IMR-90 (cell line): ENCODE measurements at regions of chr6 and their contacts with region 1.

Region 1: DNA sequence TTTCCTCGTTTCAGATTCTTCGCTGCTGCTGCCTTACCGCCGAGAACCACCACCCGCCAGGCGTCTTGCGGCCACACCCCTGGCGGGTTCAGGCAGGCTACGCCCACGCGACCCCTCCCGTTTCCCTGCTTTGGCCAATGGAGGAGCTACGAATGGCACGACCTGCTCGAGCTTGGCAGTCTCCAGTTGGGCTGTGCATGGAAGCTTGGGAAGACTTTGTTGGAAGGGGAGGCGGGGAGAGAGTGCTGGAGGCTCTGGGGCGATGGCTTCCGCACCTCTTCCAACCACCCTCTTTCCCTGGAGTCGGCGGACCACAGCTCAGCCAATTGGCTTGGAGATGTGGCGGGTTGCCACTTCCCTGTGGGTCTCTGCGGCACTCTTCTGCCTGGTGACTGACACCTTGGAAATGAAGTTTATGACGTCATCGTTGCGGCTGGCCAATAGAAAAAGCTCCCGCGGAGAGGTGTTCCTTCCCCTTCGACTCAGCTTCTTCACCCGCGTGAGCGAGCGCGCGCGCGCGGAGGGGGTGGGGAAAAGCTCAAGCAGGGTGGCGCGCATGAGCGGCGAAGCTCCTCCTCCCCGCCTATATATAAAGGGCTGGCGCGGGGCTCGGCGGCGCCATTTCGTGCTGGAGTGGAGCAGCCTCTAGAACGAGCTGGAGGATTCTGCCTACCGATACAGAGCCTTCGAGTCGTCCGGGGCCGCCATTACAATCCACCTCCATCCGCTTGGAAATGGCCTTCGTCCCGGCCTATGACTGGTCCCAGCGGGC is 3.4 kb downstream of the BRD2 start:
- DNase-seq: peak; percentile 100
- ATAC-seq: peak; percentile 31
- H3K4me3 ChIP-seq: peak overlapping the region; percentile 92
- H3K27ac ChIP-seq: peak overlapping the region; percentile 100
- H3K4me1 ChIP-seq: peaks cover 7% of the 10 kb centered on the region
- H3K27me3 ChIP-seq: no peaks in the 10 kb centered on the region
- CTCF ChIP-seq: no peak
- POLR2A ChIP-seq: peak; percentile 100
- RAD21 ChIP-seq: 0 out of 2 replicates have a peak, but pooled peaks have one; percentile 22

Region 2: DNA sequence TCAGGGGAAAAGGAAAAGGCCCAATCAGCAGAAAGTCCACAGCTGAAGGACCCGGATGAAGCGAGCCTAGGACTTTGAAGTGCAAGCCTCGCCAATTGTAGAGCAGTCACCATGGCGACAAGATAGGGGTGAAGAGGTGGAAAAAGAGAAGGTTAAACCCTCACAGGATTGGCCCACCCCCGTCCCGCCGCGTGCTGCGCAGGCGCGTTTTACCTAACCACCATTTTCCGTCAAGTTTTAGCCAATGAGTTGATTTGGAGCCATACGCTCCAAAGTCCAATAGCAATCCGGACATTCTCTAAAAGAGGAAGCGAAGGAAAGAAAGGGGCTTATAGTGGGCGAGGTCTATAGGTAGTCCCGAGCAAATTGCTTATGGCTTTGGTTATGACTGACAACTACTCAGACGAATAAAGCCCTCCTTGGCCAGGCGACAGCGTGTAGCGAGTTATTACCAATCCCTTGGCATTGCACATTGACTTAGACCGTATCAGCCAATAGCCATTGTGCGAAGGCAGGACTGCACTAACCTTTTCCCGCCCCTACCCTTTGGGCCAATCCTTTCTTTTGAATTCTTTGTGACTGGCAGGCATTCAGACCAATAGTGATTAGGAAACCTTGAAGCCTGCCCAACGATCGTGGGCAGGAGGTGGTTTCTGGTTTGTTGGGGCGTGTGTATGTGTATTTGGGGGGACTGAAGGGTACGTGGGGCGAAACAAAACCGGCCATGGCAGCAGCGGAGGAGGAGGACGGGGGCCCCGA is 793.8 kb before region 1 on chr6 and contains the start of gene RNF5:
- CTCF ChIA-PET with region 1: no interaction called
- POLR2A ChIA-PET with region 1: interaction called, 9 read pairs
- dilution Hi-C with region 1: no loop called
- in situ Hi-C with region 1: loop called (anchors 25 kb)
- intact Hi-C with region 1: no loop called
- DNase-seq: peak; percentile 100
- ATAC-seq: peak; percentile 78
- H3K4me3 ChIP-seq: peak within 1 kb of the TSS; percentile 65
- H3K27ac ChIP-seq: peak within 1 kb of the TSS; percentile 74
- H3K4me1 ChIP-seq: peaks cover 5% of the 10 kb centered on the region
- H3K27me3 ChIP-seq: no peaks in the 10 kb centered on the region
- CTCF ChIP-seq: no peak
- POLR2A ChIP-seq: peak; percentile 23; the same call in 1 of the 2 replicates
- RAD21 ChIP-seq: no peak
- total RNA-seq, gene RNF5: 18.8 and 28.1 TPM in 2 replicates

Region 3: GRCh38 chr6:32457054-32457453 is 514.7 kb before region 1 on chr6:
- CTCF ChIA-PET with region 1: no interaction called
- POLR2A ChIA-PET with region 1: no interaction called
- dilution Hi-C with region 1: no loop called
- in situ Hi-C with region 1: no loop called
- intact Hi-C with region 1: no loop called
- DNase-seq: no peak
- ATAC-seq: no peak
- H3K4me3 ChIP-seq: no peak overlapping the region
- H3K27ac ChIP-seq: no peak overlapping the region
- H3K4me1 ChIP-seq: no peaks in the 10 kb centered on the region
- H3K27me3 ChIP-seq: no peaks in the 10 kb centered on the region
- CTCF ChIP-seq: no peak
- POLR2A ChIP-seq: no peak
- RAD21 ChIP-seq: no peak

Region 4: GRCh38 chr6:32843979-32844838 is 127.6 kb before region 1 on chr6 and contains the start of gene PSMB8:
- CTCF ChIA-PET with region 1: no interaction called
- POLR2A ChIA-PET with region 1: no interaction called
- dilution Hi-C with region 1: no loop called
- in situ Hi-C with region 1: no loop called
- intact Hi-C with region 1: loop called (anchors 2 kb)
- DNase-seq: peak; percentile 90
- ATAC-seq: peak; percentile 94
- H3K4me3 ChIP-seq: peak within 1 kb of the TSS; percentile 73
- H3K27ac ChIP-seq: peak within 1 kb of the TSS; percentile 67
- H3K4me1 ChIP-seq: 0 out of 2 replicates have a peak, but pooled peaks cover 2% of the 10 kb centered on the region
- H3K27me3 ChIP-seq: no peaks in the 10 kb centered on the region
- CTCF ChIP-seq: 0 out of 2 replicates have a peak, but pooled peaks have one; percentile 19
- POLR2A ChIP-seq: peak; percentile 27; the same call in 1 of the 2 replicates
- RAD21 ChIP-seq: no peak
- total RNA-seq, gene PSMB8: 26.1 and 33.3 TPM in 2 replicates

Region 5: GRCh38 chr6:32933636-32934085 is 38.1 kb before region 1 on chr6:
- CTCF ChIA-PET with region 1: interaction called, 18 read pairs
- POLR2A ChIA-PET with region 1: interaction called, 8 read pairs
- dilution Hi-C with region 1: no loop called
- in situ Hi-C with region 1: loop called (anchors 5 kb)
- intact Hi-C with region 1: loop called (anchors 2 kb)
- DNase-seq: peak; percentile 73
- ATAC-seq: peak; percentile 91
- H3K4me3 ChIP-seq: no peak overlapping the region
- H3K27ac ChIP-seq: no peak overlapping the region
- H3K4me1 ChIP-seq: no peaks in the 10 kb centered on the region
- H3K27me3 ChIP-seq: peaks cover 17% of the 10 kb centered on the region
- CTCF ChIP-seq: peak; percentile 85
- POLR2A ChIP-seq: no peak
- RAD21 ChIP-seq: peak; percentile 80

Region 6: DNA sequence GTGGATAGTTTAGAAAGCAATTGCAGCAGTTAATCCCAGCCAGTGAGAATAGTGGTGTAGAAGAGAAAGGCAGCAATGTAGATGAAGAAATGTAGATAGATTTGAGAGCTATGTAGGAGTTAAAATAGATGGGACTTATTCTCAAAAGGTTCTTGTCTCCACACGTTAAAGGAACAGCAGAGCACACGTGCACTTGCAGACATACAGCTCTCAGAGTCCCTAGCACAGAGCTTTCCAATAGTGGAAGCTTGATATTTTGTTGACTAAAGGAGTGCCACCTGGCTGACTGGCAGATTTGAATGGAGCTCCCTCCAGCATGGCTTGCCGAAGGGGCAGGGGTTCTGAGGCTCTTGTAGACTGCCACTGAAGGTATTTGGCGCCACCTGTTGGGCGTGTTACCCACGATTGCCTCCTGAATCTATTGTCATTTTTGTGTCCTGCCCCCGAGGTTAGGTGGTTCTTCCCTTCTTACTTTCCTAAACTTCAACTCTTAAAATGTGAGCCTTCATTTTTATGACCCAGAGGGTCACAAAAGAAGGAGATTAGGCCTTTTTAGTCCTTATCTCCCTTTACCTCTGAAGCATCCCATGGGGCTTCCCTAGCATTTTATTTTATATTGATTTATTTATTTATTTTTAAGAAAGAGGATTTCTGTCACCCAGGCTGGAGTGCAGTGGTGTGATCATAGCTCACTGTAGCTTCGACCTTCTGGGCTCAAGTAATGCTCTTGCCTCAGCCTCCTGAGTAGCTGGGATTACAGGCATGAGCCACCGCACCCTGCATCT is 13.0 kb after region 1 on chr6:
- CTCF ChIA-PET with region 1: interaction called, 17 read pairs
- POLR2A ChIA-PET with region 1: interaction called, 27 read pairs
- dilution Hi-C with region 1: no loop called
- in situ Hi-C with region 1: no loop called
- intact Hi-C with region 1: no loop called
- DNase-seq: peak; percentile 79
- ATAC-seq: peak; percentile 75
- H3K4me3 ChIP-seq: no peak overlapping the region
- H3K27ac ChIP-seq: no peak overlapping the region
- H3K4me1 ChIP-seq: no peaks in the 10 kb centered on the region
- H3K27me3 ChIP-seq: peaks cover 11% of the 10 kb centered on the region
- CTCF ChIP-seq: peak; percentile 93
- POLR2A ChIP-seq: no peak
- RAD21 ChIP-seq: peak; percentile 97

Region 7: DNA sequence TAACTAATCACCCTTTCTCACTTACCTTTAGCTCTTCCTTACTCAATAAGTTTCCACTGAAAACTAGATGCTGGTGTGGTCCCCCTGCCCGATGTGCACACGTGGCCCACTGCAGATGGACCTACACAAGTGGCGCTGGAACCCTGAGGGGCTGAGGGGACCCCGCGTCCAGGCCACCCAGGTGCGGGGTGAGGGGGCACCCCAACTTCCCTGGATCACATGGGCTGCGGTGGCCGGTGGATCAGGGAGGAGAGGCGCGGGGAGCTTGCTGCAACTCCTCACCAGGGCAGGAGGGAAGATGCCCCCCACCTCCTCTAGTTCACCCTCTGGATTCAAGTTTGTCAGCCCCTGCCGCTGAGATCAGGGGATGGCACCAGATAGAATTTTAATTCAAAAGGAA is 50.1 kb after region 1 on chr6:
- CTCF ChIA-PET with region 1: no interaction called
- POLR2A ChIA-PET with region 1: no interaction called
- dilution Hi-C with region 1: no loop called
- in situ Hi-C with region 1: no loop called
- intact Hi-C with region 1: no loop called
- DNase-seq: no peak
- ATAC-seq: no peak
- H3K4me3 ChIP-seq: no peak overlapping the region
- H3K27ac ChIP-seq: no peak overlapping the region
- H3K4me1 ChIP-seq: no peaks in the 10 kb centered on the region; the same call in 1 of the 2 replicates
- H3K27me3 ChIP-seq: peaks cover 30% of the 10 kb centered on the region
- CTCF ChIP-seq: no peak
- POLR2A ChIP-seq: no peak
- RAD21 ChIP-seq: no peak

Region 8: GRCh38 chr6:33040157-33040556 is 68.4 kb after region 1 on chr6:
- CTCF ChIA-PET with region 1: no interaction called
- POLR2A ChIA-PET with region 1: no interaction called
- dilution Hi-C with region 1: no loop called
- in situ Hi-C with region 1: no loop called
- intact Hi-C with region 1: no loop called
- DNase-seq: no peak
- ATAC-seq: no peak
- H3K4me3 ChIP-seq: no peak overlapping the region
- H3K27ac ChIP-seq: no peak overlapping the region
- H3K4me1 ChIP-seq: no peaks in the 10 kb centered on the region
- H3K27me3 ChIP-seq: peaks cover 5% of the 10 kb centered on the region
- CTCF ChIP-seq: no peak
- POLR2A ChIP-seq: no peak
- RAD21 ChIP-seq: no peak

Region 9: GRCh38 chr6:33200219-33201146 is 228.7 kb after region 1 on chr6 and contains the starts of genes RXRB and SLC39A7:
- CTCF ChIA-PET with region 1: no interaction called
- POLR2A ChIA-PET with region 1: no interaction called
- dilution Hi-C with region 1: no loop called
- in situ Hi-C with region 1: no loop called
- intact Hi-C with region 1: loop called (anchors 2 kb)
- DNase-seq: peak; percentile 99
- ATAC-seq: peak; percentile 77
- H3K4me3 ChIP-seq: peak within 1 kb of the TSS; percentile 73
- H3K27ac ChIP-seq: peak within 1 kb of the TSS; percentile 95
- H3K4me1 ChIP-seq: peaks cover 20% of the 10 kb centered on the region
- H3K27me3 ChIP-seq: no peaks in the 10 kb centered on the region
- CTCF ChIP-seq: no peak
- POLR2A ChIP-seq: peak; percentile 92
- RAD21 ChIP-seq: no peak
- total RNA-seq, gene RXRB: 16.7 and 18.6 TPM in 2 replicates
- total RNA-seq, gene SLC39A7: 134 and 135 TPM in 2 replicates